ENCODE measurements at regions of chr3 and their contacts with region 1.

Region 1: GRCh38 chr3:127455541-127456450 is 134.7 kb downstream of the TPRA1 start:
- DNase-seq: peak; percentile 75
- H3K4me3 Mint-ChIP-seq: no peak overlapping the region
- H3K27ac Mint-ChIP-seq: no peak overlapping the region
- H3K4me1 Mint-ChIP-seq: peaks cover 16% of the 10 kb centered on the region
- H3K27me3 Mint-ChIP-seq: peaks cover 62% of the 10 kb centered on the region

Region 2: GRCh38 chr3:126679318-126679751 is 776.5 kb before region 1 on chr3:
- CTCF ChIA-PET with region 1: interaction called, 11 read pairs
- POLR2A ChIA-PET with region 1: no interaction called
- intact Hi-C with region 1: loop called (anchors 1 kb)
- DNase-seq: peak; percentile 84
- H3K4me3 Mint-ChIP-seq: peak overlapping the region; percentile 28
- H3K27ac Mint-ChIP-seq: no peak overlapping the region
- H3K4me1 Mint-ChIP-seq: peaks cover 5% of the 10 kb centered on the region
- H3K27me3 Mint-ChIP-seq: peaks cover 13% of the 10 kb centered on the region

Region 3: DNA sequence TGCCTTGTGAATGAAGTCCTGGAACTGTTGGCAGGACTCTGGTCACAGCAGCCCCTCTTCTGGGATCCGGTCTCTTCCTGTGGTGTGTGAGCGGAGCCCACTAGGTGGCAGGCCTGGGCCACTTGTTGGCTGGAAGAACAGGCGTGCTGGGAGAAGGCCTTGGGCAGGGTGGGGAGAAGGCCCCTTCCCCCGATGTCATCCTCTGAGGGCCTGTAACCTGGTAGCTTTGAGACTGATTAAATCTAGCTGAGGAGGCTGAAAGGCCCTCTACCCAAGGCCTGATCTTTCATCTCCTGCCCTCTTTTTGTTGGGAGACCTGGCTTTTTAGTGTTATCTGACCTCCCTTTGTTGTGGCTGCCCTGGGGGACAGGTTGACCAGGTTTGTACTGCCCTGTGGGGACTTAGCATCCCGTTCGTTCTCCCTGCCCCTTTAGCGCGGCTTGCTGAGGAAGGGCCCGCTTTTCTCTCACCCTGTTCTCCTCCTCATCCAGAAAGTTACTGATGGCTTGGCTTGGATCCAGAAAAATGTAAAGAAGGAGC is 703.4 kb before region 1 on chr3:
- CTCF ChIA-PET with region 1: interaction called, 7 read pairs
- POLR2A ChIA-PET with region 1: no interaction called
- intact Hi-C with region 1: loop called (anchors 5 kb)
- DNase-seq: peak; percentile 75
- H3K4me3 Mint-ChIP-seq: no peak overlapping the region
- H3K27ac Mint-ChIP-seq: no peak overlapping the region
- H3K4me1 Mint-ChIP-seq: peaks cover 5% of the 10 kb centered on the region
- H3K27me3 Mint-ChIP-seq: no peaks in the 10 kb centered on the region

Region 4: DNA sequence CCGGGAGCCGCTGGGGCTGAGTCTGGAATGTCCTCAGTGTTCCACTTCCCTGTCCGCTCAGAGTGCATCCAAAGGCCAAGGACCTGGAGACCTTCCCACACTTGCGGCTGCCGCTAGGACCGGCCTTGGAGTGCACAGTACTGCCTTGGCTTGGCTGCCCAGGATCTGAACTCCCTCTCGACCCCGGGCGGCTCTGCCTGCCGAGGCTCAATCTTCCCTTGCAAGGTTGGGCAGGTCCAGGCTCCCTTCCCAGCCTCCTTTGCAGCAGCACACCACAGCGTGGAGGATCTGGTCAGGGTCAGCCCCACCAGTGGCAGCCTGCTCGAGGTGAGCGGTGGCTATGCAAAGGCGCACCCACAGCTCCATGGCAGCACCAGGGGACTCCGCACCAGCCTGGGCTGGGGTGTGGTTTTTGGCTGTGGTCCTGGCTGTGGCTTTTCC is 403.7 kb before region 1 on chr3:
- CTCF ChIA-PET with region 1: no interaction called
- POLR2A ChIA-PET with region 1: no interaction called
- intact Hi-C with region 1: no loop called
- DNase-seq: no peak
- H3K4me3 Mint-ChIP-seq: no peak overlapping the region
- H3K27ac Mint-ChIP-seq: no peak overlapping the region
- H3K4me1 Mint-ChIP-seq: no peaks in the 10 kb centered on the region
- H3K27me3 Mint-ChIP-seq: peaks cover 2% of the 10 kb centered on the region

Region 5: GRCh38 chr3:127483902-127484591 is 28.3 kb after region 1 on chr3:
- CTCF ChIA-PET with region 1: interaction called, 3 read pairs
- POLR2A ChIA-PET with region 1: no interaction called
- intact Hi-C with region 1: loop called (anchors 2 kb)
- DNase-seq: peak; percentile 86
- H3K4me3 Mint-ChIP-seq: no peak overlapping the region
- H3K27ac Mint-ChIP-seq: peak overlapping the region; percentile 34
- H3K4me1 Mint-ChIP-seq: peaks cover 23% of the 10 kb centered on the region
- H3K27me3 Mint-ChIP-seq: peaks cover 26% of the 10 kb centered on the region

Region 6: DNA sequence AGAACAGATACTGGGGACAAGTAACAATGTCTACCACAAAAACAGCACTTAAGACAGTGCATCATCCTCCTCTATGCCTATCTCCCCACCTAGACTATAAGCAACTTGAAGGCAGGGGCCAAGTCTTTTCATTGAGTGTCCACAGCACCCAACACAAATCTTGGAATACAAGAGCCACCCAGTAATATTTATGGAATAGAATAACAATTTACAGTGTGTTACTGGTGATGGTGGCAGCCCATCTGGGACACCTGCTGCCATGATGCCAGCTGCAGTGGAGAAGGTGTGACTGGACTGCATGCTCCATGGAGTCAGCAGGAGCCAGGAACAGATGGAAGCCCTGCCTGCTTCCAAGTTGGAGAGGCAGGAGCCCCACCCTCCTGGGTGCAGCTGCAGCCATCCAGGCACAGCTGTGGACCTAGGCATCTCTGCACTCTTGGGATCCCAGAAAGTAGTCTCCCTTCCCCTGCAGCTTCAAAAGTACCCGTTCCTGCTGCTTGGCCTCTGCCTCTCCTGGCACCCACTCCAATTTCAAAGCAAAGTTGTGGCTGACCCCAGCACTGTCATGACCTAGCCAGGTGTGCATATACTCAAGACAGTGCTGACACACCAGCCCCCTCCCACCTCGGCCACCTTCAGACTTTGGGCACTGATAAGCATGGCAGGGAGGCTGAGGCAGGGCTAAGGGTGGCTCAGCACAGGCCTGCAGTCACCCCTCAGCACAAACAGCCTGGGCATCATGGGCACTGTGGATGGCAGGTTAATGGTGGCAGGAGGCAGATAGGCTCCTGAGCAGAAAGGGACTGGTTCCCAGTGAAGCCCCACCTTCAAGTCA is 40.2 kb after region 1 on chr3:
- CTCF ChIA-PET with region 1: no interaction called
- POLR2A ChIA-PET with region 1: no interaction called
- intact Hi-C with region 1: no loop called
- DNase-seq: no peak
- H3K4me3 Mint-ChIP-seq: no peak overlapping the region
- H3K27ac Mint-ChIP-seq: no peak overlapping the region
- H3K4me1 Mint-ChIP-seq: no peaks in the 10 kb centered on the region
- H3K27me3 Mint-ChIP-seq: peaks cover 12% of the 10 kb centered on the region

Measured in activated CD4-positive, alpha-beta memory T cell treated with anti-CD3 and anti-CD28 coated beads for 36 hours (primary cell).